ENCODE measurements at regions of chr13 and their contacts with region 1.

Region 1: GRCh38 chr13:42271337-42272114 is 426 bp upstream of the AKAP11 start:
- DNase-seq: peak; percentile 82 to 99 (median 90)
- ATAC-seq: peak; percentile 84
- H3K4me3 ChIP-seq: peak overlapping the region; percentile 87
- H3K4me3 Mint-ChIP-seq: peak overlapping the region; percentile 99
- H3K27ac ChIP-seq: peak overlapping the region; percentile 91 to 96
- H3K27ac Mint-ChIP-seq: no peak overlapping the region
- H3K4me1 ChIP-seq: peaks cover 39% of the 10 kb centered on the region
- H3K4me1 Mint-ChIP-seq: peaks cover 53% of the 10 kb centered on the region
- H3K27me3 ChIP-seq: no peaks in the 10 kb centered on the region
- H3K27me3 Mint-ChIP-seq: no peaks in the 10 kb centered on the region
- CTCF ChIP-seq: no peak

Region 2: DNA sequence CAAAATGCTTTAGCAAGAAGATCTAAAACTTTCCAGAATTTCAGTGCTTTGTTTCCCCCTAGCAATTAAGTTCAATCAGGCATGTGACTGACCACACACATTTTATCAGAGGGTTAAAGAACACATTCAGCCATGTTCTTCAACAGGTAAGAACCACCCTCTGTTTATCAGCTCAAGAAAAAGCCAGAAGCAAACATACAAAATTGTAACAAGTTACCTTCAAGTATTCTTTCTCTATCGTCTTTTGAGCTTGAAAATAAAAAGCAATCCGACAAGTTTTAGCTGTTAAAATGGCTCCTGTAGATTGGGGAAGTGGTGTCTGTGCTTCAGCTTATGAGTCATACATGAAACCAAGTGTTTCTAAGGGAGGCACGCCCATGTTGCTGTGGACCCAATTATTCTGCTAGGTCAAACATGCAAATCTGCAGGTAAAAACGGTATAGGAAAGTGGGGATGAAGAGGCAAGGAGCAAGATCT is 1252.5 kb before region 1 on chr13 and contains the start of gene ELF1:
- CTCF ChIA-PET with region 1: no interaction called
- POLR2A ChIA-PET with region 1: interaction called, 3 read pairs
- intact Hi-C with region 1: loop called in 1 of 2 experiments (anchors 10 kb)
- DNase-seq: peak in 13 of 14 experiments; percentile 39 to 89 (median 53)
- ATAC-seq: peak; percentile 89
- H3K4me3 ChIP-seq: peak within 1 kb of the TSS; percentile 68
- H3K4me3 Mint-ChIP-seq: peak within 1 kb of the TSS; percentile 94
- H3K27ac ChIP-seq: peak within 1 kb of the TSS; percentile 77 to 85
- H3K27ac Mint-ChIP-seq: peak within 1 kb of the TSS; percentile 94
- H3K4me1 ChIP-seq: no peaks in the 10 kb centered on the region
- H3K4me1 Mint-ChIP-seq: peaks cover 49% of the 10 kb centered on the region
- H3K27me3 ChIP-seq: no peaks in the 10 kb centered on the region
- H3K27me3 Mint-ChIP-seq: no peaks in the 10 kb centered on the region
- CTCF ChIP-seq: no peak
- total RNA-seq, gene ELF1: 354 to 358 TPM

Region 3: GRCh38 chr13:41263261-41264027 is 1008.1 kb before region 1 on chr13 and contains the start of gene MTRF1:
- CTCF ChIA-PET with region 1: no interaction called
- POLR2A ChIA-PET with region 1: no interaction called
- intact Hi-C with region 1: loop called in 1 of 2 experiments (anchors 5 kb)
- DNase-seq: peak; percentile 62 to 91 (median 76)
- ATAC-seq: peak; percentile 92
- H3K4me3 ChIP-seq: peak within 1 kb of the TSS; percentile 68
- H3K4me3 Mint-ChIP-seq: peak within 1 kb of the TSS; percentile 99
- H3K27ac ChIP-seq: peak within 1 kb of the TSS; percentile 77 to 78
- H3K27ac Mint-ChIP-seq: peak within 1 kb of the TSS; percentile 96
- H3K4me1 ChIP-seq: peaks cover 13% of the 10 kb centered on the region
- H3K4me1 Mint-ChIP-seq: peaks cover 35% of the 10 kb centered on the region
- H3K27me3 ChIP-seq: no peaks in the 10 kb centered on the region
- H3K27me3 Mint-ChIP-seq: no peaks in the 10 kb centered on the region
- CTCF ChIP-seq: no peak
- total RNA-seq, gene MTRF1: 15.7 to 17.8 TPM

Region 4: GRCh38 chr13:42039946-42040729 is 231.4 kb before region 1 on chr13:
- CTCF ChIA-PET with region 1: no interaction called
- POLR2A ChIA-PET with region 1: interaction called, 3 read pairs
- intact Hi-C with region 1: loop called in 1 of 2 experiments (anchors 5 kb)
- DNase-seq: peak; percentile 75 to 96 (median 88)
- ATAC-seq: peak; percentile 82
- H3K4me3 ChIP-seq: peak overlapping the region; percentile 83
- H3K4me3 Mint-ChIP-seq: peak overlapping the region; percentile 87
- H3K27ac ChIP-seq: peak overlapping the region; percentile 53 to 68
- H3K27ac Mint-ChIP-seq: peak overlapping the region; percentile 85
- H3K4me1 ChIP-seq: peaks cover 20% of the 10 kb centered on the region
- H3K4me1 Mint-ChIP-seq: peaks cover 19% of the 10 kb centered on the region
- H3K27me3 ChIP-seq: no peaks in the 10 kb centered on the region
- H3K27me3 Mint-ChIP-seq: no peaks in the 10 kb centered on the region
- CTCF ChIP-seq: no peak

Region 5: DNA sequence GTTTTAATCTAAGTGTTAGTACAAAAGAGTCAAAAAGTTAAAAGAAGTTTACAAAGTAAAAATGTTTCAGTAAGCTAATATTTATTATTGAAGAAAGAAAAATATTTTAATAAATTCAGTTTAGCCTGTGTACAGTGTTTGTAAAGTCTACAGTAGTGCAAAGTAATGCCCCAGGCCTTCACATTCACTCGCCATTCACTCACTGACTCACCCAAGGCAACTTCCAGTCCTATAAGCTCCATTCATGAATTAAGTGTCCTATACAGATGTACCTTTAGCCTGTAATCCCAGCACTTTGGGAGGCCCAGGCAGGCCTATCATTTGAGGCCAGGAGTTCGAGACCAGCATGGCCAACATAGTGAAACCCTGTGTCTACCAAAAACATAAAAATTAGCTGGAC is 23.6 kb before region 1 on chr13:
- CTCF ChIA-PET with region 1: no interaction called
- POLR2A ChIA-PET with region 1: no interaction called
- intact Hi-C with region 1: no loop called
- DNase-seq: no peak
- ATAC-seq: no peak
- H3K4me3 ChIP-seq: no peak overlapping the region
- H3K4me3 Mint-ChIP-seq: no peak overlapping the region
- H3K27ac ChIP-seq: no peak overlapping the region
- H3K27ac Mint-ChIP-seq: no peak overlapping the region
- H3K4me1 ChIP-seq: no peaks in the 10 kb centered on the region
- H3K4me1 Mint-ChIP-seq: no peaks in the 10 kb centered on the region
- H3K27me3 ChIP-seq: no peaks in the 10 kb centered on the region
- H3K27me3 Mint-ChIP-seq: peaks cover 4% of the 10 kb centered on the region
- CTCF ChIP-seq: no peak

Region 6: GRCh38 chr13:42327725-42328124 is 56.2 kb after region 1 on chr13:
- CTCF ChIA-PET with region 1: no interaction called
- POLR2A ChIA-PET with region 1: interaction called, 10 read pairs
- intact Hi-C with region 1: no loop called
- DNase-seq: no peak
- ATAC-seq: no peak
- H3K4me3 ChIP-seq: no peak overlapping the region
- H3K4me3 Mint-ChIP-seq: no peak overlapping the region
- H3K27ac ChIP-seq: no peak overlapping the region
- H3K27ac Mint-ChIP-seq: no peak overlapping the region
- H3K4me1 ChIP-seq: peaks cover 6% of the 10 kb centered on the region
- H3K4me1 Mint-ChIP-seq: peaks cover 23% of the 10 kb centered on the region
- H3K27me3 ChIP-seq: no peaks in the 10 kb centered on the region
- H3K27me3 Mint-ChIP-seq: no peaks in the 10 kb centered on the region
- CTCF ChIP-seq: no peak

Region 7: GRCh38 chr13:42574435-42575311 is 303.1 kb after region 1 on chr13:
- CTCF ChIA-PET with region 1: no interaction called
- POLR2A ChIA-PET with region 1: no interaction called
- intact Hi-C with region 1: no loop called
- DNase-seq: peak in 10 of 14 experiments; percentile 6 to 45 (median 28)
- ATAC-seq: peak; percentile 67
- H3K4me3 ChIP-seq: peak overlapping the region; percentile 59
- H3K4me3 Mint-ChIP-seq: peak overlapping the region; percentile 89
- H3K27ac ChIP-seq: no peak overlapping the region
- H3K27ac Mint-ChIP-seq: no peak overlapping the region
- H3K4me1 ChIP-seq: peaks cover 24% of the 10 kb centered on the region
- H3K4me1 Mint-ChIP-seq: peaks cover 33% of the 10 kb centered on the region
- H3K27me3 ChIP-seq: peaks cover 0 to 9% of the 10 kb centered on the region in 2 experiments
- H3K27me3 Mint-ChIP-seq: peaks cover 6% of the 10 kb centered on the region
- CTCF ChIP-seq: no peak

Measured in CD4-positive, alpha-beta T cell (primary cell).